ENCODE measurements at regions of chr12 and their contacts with region 1.

Region 1: DNA sequence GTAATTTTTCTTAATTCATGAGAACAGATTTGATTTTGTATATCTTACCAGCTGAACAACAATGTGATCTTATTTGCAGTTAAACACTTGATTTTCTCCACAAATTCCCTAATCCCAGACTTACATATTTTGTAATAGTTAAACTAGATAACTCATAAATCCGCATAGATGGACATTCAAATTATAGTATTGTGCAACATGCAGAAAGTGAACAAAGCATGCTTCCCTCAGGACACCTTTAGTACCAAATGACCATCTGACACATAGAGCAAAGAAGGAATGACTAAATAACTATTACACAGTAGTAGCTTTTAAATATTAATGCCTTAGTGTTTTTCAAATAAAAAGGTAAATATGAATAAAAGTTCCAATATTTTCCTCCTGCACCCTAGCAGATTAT is 88.9 kb downstream of the PAWR start:
- DNase-seq: no peak
- H3K4me3 Mint-ChIP-seq: no peak overlapping the region
- H3K27ac Mint-ChIP-seq: no peak overlapping the region
- H3K4me1 Mint-ChIP-seq: peaks cover 16% of the 10 kb centered on the region
- H3K27me3 Mint-ChIP-seq: no peaks in the 10 kb centered on the region
- CTCF ChIP-seq: no peak

Region 2: GRCh38 chr12:79274501-79275064 is 327.3 kb before region 1 on chr12:
- CTCF ChIA-PET with region 1: no interaction called
- intact Hi-C with region 1: no loop called
- DNase-seq: no peak
- H3K4me3 Mint-ChIP-seq: no peak overlapping the region
- H3K27ac Mint-ChIP-seq: no peak overlapping the region
- H3K4me1 Mint-ChIP-seq: no peaks in the 10 kb centered on the region
- H3K27me3 Mint-ChIP-seq: no peaks in the 10 kb centered on the region
- CTCF ChIP-seq: no peak

Region 3: GRCh38 chr12:79444089-79444488 is 157.8 kb before region 1 on chr12:
- CTCF ChIA-PET with region 1: no interaction called
- intact Hi-C with region 1: no loop called
- DNase-seq: no peak
- H3K4me3 Mint-ChIP-seq: no peak overlapping the region
- H3K27ac Mint-ChIP-seq: no peak overlapping the region
- H3K4me1 Mint-ChIP-seq: peaks cover 25% of the 10 kb centered on the region
- H3K27me3 Mint-ChIP-seq: no peaks in the 10 kb centered on the region
- CTCF ChIP-seq: no peak

Region 4: GRCh38 chr12:79566473-79567174 is 35.3 kb before region 1 on chr12:
- CTCF ChIA-PET with region 1: no interaction called
- intact Hi-C with region 1: loop called (anchors 5 kb)
- DNase-seq: peak; percentile 39
- H3K4me3 Mint-ChIP-seq: peak overlapping the region; percentile 29
- H3K27ac Mint-ChIP-seq: peak overlapping the region; percentile 81
- H3K4me1 Mint-ChIP-seq: peaks cover 45% of the 10 kb centered on the region
- H3K27me3 Mint-ChIP-seq: no peaks in the 10 kb centered on the region
- CTCF ChIP-seq: no peak

Region 5: DNA sequence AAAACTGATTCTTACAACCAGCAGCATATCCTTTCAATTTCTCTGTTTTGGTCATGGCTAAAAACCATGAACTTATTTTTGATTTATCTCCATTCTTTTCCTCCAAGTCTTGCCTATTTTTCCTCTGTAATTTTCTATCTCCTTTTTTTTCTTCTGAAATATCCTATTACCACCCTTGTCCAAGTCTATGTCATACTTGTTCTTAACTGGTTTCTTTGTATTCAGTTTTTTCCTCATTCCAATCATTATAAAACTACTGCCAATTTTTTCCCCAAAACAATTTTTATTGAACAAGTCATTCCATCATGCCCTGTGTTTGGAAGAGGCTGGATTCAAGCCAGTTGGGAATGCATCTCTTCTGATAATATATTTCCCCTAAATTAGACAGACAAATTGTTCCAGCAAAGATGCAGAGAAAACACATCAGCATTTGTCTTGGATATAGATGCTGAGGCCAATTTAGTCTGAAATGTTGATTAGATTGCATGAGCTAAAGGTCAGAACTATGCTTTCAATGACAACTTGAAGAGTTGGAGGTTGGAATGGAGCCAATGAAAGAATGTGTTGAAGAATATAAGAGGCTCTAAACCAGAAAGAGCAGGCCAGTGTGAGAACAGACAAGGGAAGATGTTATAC is 528.1 kb after region 1 on chr12:
- CTCF ChIA-PET with region 1: no interaction called
- intact Hi-C with region 1: no loop called
- DNase-seq: peak; percentile 3
- H3K4me3 Mint-ChIP-seq: no peak overlapping the region
- H3K27ac Mint-ChIP-seq: peak overlapping the region; percentile 34
- H3K4me1 Mint-ChIP-seq: peaks cover 20% of the 10 kb centered on the region
- H3K27me3 Mint-ChIP-seq: no peaks in the 10 kb centered on the region
- CTCF ChIP-seq: no peak